A549 (cell line): ENCODE measurements at regions of chr17 and their contacts with region 1.

Region 1: DNA sequence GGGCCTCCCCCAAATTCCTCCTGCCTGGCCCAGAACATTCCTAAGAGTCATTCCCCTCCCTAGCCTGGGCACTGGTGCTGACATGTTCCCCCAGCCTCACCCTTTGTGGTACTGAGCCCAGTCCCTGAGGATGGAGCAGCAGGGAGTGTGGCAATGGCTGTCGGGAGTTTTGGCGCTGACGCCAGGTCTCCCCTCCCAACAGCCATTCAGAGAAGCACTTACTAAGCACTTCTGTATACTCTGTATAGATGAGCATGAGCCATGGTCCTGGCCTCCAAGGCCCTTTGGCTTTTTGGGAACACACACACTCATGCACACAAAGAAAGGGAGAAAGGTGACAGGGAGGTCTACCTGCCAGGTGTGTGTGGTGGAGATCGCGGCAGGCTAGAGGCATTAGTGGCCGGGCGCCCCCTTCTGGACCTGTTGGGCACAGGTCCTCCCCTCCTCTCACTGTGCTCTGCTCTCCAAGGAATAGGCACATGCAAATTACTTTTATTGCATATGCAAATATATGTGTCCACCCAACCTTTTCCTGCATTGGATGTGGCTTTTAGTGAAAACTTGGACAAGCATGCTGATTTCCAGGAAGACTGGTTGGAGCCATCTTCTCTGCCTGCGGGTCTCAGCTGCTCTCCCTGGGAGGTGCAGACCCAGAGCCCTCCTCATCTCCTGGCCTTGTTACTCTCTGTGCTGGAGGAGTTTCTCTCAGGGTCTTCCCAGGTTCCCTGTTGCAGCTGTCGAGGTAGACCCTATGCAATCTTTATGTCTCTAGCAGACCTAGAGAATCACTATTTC is 17.4 kb upstream of the C17orf107 start:
- DNase-seq: peak; percentile 70 to 71
- ATAC-seq: peak; percentile 84 to 93
- H3K4me3 ChIP-seq: no peak overlapping the region
- H3K27ac ChIP-seq: no peak overlapping the region
- H3K4me1 ChIP-seq: no peaks in the 10 kb centered on the region
- CTCF ChIP-seq: peak; percentile 95
- EP300 ChIP-seq: no peak
- POLR2A ChIP-seq: no peak
- RAD21 ChIP-seq: peak; percentile 87 to 91

Region 2: DNA sequence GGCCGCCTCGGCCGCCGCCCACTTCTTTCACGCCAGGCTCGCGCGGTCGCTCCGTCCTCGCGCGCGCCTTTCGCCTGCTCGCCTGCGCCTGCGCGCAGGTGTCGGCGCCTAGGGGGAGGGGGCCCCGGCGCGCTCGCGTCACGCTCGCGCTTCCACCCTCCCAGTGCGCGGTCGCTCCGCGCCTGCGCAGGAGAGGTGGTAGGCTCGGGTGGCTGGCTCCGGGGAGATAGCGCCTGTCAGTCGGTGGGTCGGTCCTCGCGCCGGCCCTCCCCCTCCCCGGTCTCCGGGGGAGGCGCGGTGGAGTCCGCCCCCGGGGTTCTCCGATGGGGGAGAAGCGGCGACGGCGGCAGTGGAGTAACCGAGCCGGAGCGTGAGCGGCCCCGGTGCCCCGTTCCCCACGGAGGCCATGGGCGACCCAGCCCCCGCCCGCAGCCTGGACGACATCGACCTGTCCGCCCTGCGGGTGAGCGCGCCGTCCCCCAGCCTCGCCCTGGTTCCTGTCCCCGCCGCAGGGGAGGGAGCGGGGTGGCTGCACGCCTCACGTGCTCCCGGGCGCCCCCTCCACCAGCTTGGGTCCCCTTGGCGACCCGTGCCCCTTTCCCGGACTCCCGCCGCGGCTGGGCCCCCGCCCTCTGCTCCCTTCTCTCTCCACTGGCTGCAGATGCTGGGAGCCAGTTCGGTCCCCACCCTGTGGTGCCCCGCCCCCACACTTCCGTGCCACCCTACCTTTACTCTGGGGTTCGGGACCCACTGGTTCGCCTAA is 48.6 kb before region 1 on chr17 and contains the start of gene MINK1:
- CTCF ChIA-PET with region 1: interaction called, 24 read pairs
- POLR2A ChIA-PET with region 1: no interaction called
- DNase-seq: peak; percentile 96 to 99
- ATAC-seq: peak; percentile 92 to 93
- H3K4me3 ChIP-seq: peak within 1 kb of the TSS; percentile 85
- H3K27ac ChIP-seq: peak within 1 kb of the TSS; percentile 91 to 95
- H3K4me1 ChIP-seq: peaks cover 21% of the 10 kb centered on the region
- CTCF ChIP-seq: no peak
- EP300 ChIP-seq: no peak
- POLR2A ChIP-seq: peak; percentile 47
- RAD21 ChIP-seq: no peak
- polyA plus RNA-seq, gene MINK1: 41.3 and 47.1 TPM in 2 replicates

Region 3: DNA sequence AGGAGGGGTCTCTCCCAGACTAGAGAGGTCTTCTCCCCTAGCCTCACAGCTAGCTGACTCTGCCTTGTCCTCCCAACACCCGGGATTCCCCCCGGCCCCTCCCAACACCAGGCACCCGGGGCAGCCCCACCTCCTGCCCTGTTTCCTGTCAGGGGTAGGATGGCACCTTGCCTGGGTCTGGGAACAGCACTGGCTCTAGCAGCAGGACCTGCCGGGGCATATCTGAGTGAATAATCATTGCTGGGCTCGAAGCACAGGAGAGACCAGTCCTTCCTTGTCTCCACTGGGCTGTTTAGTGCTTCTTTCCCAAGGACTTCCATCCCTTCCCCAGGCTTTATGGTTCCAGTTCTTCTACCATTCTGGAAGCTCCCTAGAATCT is 23.1 kb before region 1 on chr17:
- CTCF ChIA-PET with region 1: interaction called, 16 read pairs
- POLR2A ChIA-PET with region 1: no interaction called
- DNase-seq: no peak
- ATAC-seq: peak; percentile 51 to 64; a peak in 4 of 6 replicates
- H3K4me3 ChIP-seq: no peak overlapping the region
- H3K27ac ChIP-seq: peak overlapping the region; percentile 5 to 76; a peak in 4 of 6 replicates
- H3K4me1 ChIP-seq: peaks cover 24% of the 10 kb centered on the region
- CTCF ChIP-seq: no peak
- EP300 ChIP-seq: no peak
- POLR2A ChIP-seq: no peak
- RAD21 ChIP-seq: no peak